Caco-2 (cell line): ENCODE measurements at regions of chr12 and their contacts with region 1.

Region 1: DNA sequence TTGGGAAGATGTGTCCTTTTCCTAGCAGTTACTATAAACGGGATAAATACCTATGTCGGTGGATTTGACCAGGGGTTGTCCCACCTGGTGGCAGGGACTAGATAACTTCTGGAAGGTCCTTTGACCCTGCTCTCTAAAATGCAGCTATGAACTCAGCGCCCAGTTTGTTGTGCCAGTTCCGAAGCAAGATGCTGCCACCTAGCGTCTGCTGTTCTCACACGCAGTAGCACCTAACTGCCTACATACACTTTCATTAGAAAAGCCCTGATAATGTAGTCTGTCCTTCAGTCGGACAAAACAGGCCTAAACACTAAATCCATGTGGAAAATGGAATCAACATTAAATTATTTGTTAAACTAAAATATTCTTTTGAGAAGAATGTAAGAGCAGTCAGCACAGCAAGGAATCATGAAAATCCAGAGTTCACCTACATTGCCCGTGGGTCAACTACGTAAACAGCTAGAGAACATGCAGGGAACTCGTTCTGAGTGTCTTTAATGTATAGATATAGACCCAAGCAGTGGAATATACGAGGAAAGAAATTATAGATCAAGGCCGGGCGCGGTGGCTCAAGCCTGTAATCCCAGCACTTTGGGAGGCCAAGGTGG is 51.1 kb upstream of the CRACR2A start:
- DNase-seq: peak; percentile 80
- H3K4me3 ChIP-seq: no peak overlapping the region
- H3K4me3 Mint-ChIP-seq: no peak overlapping the region
- H3K27ac Mint-ChIP-seq: no peak overlapping the region
- H3K4me1 ChIP-seq: no peaks in the 10 kb centered on the region
- H3K4me1 Mint-ChIP-seq: no peaks in the 10 kb centered on the region
- H3K27me3 ChIP-seq: no peaks in the 10 kb centered on the region
- H3K27me3 Mint-ChIP-seq: no peaks in the 10 kb centered on the region
- CTCF ChIP-seq: peak; percentile 95 to 98

Region 2: DNA sequence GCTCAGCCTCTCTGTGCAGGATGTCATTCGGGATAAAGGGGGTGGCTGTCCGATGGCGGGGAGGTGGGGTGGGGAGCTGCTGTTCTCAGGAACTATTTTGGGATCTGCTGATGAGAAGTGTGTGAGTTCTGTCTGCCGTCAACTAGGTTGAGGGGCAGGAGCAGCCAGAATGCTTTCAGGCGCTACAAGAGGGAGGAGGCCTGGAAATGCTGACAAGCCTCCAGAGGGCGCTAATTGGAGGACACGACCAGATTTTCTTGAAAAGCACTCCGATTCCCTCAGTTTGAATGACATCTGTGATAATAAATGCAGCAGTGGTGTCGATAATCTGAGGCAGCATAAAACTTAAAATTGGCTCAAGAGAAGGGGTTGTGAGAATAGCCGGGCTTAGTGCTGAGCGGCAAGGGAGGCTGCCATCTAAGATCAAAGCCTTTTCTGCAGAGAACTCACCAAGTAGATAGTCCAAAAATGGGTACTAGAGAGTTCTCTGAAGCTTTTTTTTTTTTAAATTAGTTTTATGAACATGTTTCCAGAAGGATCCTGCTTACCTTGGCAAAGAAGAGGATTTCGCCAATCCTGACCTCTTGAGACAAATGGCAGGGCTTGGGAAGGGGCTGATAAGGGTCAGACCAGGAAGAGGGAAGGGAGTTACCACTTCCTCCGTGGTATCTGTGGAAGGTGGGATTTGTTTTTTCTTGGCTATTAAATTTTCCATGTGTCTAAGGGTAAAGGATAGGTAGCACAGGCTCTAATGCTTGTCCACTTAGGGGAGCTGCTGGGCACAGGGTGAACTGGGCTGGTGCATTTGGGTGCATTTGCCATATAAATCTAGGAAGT is 145.4 kb before region 1 on chr12:
- CTCF ChIA-PET with region 1: interaction called, 4 read pairs
- POLR2A ChIA-PET with region 1: no interaction called
- intact Hi-C with region 1: loop called (anchors 1 kb)
- DNase-seq: peak in 1 of 2 experiments; percentile 61
- H3K4me3 ChIP-seq: no peak overlapping the region
- H3K4me3 Mint-ChIP-seq: no peak overlapping the region
- H3K27ac Mint-ChIP-seq: no peak overlapping the region
- H3K4me1 ChIP-seq: no peaks in the 10 kb centered on the region
- H3K4me1 Mint-ChIP-seq: peaks cover 6% of the 10 kb centered on the region
- H3K27me3 ChIP-seq: no peaks in the 10 kb centered on the region
- H3K27me3 Mint-ChIP-seq: no peaks in the 10 kb centered on the region
- CTCF ChIP-seq: peak in 1 of 2 experiments; percentile 64

Region 3: DNA sequence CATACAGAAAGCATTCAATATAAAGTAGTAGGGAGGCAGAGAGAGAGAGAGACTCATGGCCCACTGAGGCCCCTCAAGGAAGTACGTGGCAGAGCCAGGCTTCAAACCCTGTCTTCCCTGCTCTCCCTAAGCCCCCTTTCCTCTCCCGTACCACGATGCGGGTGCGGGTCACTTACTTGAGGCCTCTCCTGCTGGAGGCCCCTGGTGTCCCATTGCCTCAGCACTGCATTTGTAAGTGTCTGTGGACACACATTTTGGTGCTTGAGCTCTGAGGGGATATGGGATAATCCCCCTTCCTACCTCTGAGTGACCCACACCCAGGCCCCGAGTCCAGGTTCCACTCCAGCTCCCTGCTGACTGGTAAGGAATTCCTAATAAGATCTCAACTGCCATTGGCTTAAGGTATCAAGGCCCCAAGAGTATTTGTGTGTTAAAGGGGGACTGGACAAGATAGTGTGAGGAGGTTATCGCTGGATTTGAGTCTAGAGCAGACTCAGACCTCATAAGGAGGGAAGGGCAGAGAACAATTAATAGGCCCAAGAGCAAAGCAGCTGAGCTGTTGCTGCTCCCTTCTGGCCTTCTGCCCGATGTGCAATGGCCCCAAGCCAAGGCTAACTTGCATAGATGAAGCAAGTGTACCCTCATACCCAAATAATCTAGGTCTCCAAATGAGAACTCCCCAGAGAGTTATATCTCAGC is 122.9 kb before region 1 on chr12:
- CTCF ChIA-PET with region 1: no interaction called
- POLR2A ChIA-PET with region 1: no interaction called
- intact Hi-C with region 1: no loop called
- DNase-seq: no peak
- H3K4me3 ChIP-seq: no peak overlapping the region
- H3K4me3 Mint-ChIP-seq: no peak overlapping the region
- H3K27ac Mint-ChIP-seq: no peak overlapping the region
- H3K4me1 ChIP-seq: no peaks in the 10 kb centered on the region
- H3K4me1 Mint-ChIP-seq: no peaks in the 10 kb centered on the region
- H3K27me3 ChIP-seq: no peaks in the 10 kb centered on the region
- H3K27me3 Mint-ChIP-seq: no peaks in the 10 kb centered on the region
- CTCF ChIP-seq: peak; percentile 29 to 33